ENCODE measurements at regions of chr7 and their contacts with region 1.

Region 1: DNA sequence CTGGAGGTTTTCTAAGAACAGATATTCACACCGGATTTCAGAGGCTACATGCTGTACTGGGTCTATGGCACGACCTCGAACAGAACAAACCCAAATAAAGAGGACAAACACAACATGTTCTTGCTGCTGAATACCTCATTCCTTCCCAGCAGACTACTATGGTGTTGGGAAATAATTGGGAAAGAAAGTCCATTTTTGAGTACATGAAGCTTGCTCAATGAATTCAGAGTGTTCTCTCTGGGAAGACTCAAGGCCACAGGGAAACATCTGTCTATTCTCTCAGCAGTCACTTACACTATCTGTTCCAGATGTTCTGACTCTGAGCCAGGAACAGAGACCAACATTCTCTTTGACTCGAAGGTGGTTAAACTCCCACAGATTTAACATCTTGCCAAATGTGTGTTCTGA is 30.9 kb downstream of the LAMB1 start:
- DNase-seq: peak; percentile 85
- H3K4me3 ChIP-seq: no peak overlapping the region
- H3K27me3 ChIP-seq: no peaks in the 10 kb centered on the region
- CTCF ChIP-seq: no peak

Region 2: DNA sequence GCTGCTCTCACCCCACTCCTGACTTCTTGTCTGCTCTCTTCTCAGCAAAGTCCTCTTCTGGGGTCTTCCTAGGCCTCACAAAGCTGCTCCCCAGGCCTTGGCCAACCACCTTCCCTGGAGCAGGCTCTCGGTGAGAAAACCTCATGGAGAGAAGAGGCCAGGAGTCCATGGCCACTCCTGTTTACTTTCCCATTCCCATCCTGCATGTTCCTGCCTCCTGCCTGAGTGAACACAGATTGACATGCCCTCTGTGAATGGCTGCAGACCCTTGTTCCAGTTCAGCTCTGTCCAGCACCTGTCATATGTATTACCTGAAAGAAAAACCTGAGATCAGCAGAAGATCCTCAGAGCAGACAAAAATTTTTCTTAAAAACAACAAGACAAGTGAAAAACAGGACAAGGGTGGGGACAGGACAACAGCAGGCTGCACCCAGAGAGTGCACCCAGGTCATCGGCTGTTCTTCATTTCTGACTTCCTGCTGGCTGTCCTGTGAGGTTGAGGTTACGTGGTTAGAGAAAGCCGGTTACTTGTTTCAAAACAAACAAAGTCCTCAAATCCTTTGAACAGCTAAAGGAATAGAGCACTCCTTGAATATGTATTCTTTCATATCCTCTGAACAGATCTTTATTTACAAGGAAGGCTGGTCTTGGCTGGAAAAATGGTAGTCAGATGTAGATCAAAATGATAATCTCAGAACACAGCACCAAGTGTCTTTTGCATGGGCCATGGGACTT is 115.1 kb before region 1 on chr7:
- CTCF ChIA-PET with region 1: no interaction called
- POLR2A ChIA-PET with region 1: no interaction called
- DNase-seq: no peak
- H3K4me3 ChIP-seq: no peak overlapping the region
- H3K27me3 ChIP-seq: no peaks in the 10 kb centered on the region; the same call in 1 of the 2 replicates
- CTCF ChIP-seq: no peak

Region 3: GRCh38 chr7:107982918-107983389 is 10.9 kb after region 1 on chr7:
- CTCF ChIA-PET with region 1: interaction called, 20 read pairs
- POLR2A ChIA-PET with region 1: no interaction called
- DNase-seq: peak; percentile 70
- H3K4me3 ChIP-seq: no peak overlapping the region
- H3K27me3 ChIP-seq: no peaks in the 10 kb centered on the region
- CTCF ChIP-seq: peak; percentile 52

Region 4: GRCh38 chr7:107993891-107994291 is 21.8 kb after region 1 on chr7:
- CTCF ChIA-PET with region 1: no interaction called
- POLR2A ChIA-PET with region 1: no interaction called
- DNase-seq: no peak
- H3K4me3 ChIP-seq: no peak overlapping the region
- H3K27me3 ChIP-seq: no peaks in the 10 kb centered on the region
- CTCF ChIP-seq: no peak